Left lung (tissue), 14 donors: ENCODE measurements at regions of chr3 and their contacts with region 1.

Region 1: DNA sequence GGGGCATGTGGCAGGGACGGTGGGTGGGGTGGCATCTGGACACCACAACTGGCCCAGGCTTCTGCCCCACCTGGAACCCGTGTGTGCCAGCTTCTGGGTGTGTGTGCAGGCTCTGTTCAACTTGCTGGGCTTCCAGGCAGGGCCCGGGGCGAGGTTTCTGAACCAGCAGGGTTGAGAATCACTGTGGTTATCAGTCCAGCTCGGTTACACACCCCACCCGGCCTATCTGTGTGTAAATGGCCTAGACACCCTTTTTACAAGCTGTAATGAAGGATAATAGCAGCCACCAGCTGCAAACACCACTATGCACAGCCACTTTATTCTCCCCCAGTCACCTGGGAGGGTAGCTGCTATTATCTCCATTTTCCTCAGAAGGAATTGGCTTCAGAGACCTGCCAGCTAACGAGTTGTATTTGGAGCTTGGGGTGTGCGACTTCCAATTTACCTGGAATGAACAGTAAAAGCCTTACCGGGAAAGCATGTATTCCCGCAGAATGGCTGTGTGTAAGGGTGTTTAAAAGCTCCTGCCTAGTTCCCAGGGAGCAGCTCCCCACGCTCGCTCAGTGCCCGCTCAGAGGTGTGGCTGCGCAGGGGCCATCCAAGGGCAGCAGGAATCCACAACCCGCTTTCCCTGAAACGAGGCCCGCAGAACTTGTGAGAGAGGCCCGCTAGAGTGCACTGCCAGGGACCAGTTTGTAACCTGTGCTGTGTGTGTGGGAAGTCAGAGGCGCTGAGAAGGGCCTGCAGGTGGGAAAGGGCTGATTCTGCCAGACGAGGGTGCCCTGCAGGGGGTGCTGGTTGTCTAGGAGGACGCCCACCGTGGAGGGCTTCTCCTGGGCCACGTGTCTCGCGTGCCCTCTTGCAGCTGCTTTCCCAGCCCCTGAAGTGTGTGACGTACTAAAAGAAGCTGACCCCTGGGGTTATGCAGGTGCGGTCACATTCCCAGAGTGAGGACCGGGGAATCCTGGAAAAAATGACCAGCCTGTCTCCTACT is 83.5 kb downstream of the C3orf70 start:
- DNase-seq: no peak
- ATAC-seq: no peak
- H3K4me3 ChIP-seq: no peak overlapping the region
- H3K27ac ChIP-seq: no peak overlapping the region
- H3K4me1 ChIP-seq: no peaks in the 10 kb centered on the region
- H3K27me3 ChIP-seq: no peaks in the 10 kb centered on the region
- CTCF ChIP-seq: no peak

Region 2: GRCh38 chr3:185009650-185010049 is 59.7 kb before region 1 on chr3:
- intact Hi-C with region 1: loop called in 1 of 2 experiments (anchors 10 kb)
- DNase-seq: no peak
- ATAC-seq: peak; percentile 78
- H3K4me3 ChIP-seq: no peak overlapping the region
- H3K27ac ChIP-seq: no peak overlapping the region
- H3K4me1 ChIP-seq: no peaks in the 10 kb centered on the region
- H3K27me3 ChIP-seq: no peaks in the 10 kb centered on the region
- CTCF ChIP-seq: no peak